ENCODE measurements at regions of chr14 and their contacts with region 1.

Region 1: DNA sequence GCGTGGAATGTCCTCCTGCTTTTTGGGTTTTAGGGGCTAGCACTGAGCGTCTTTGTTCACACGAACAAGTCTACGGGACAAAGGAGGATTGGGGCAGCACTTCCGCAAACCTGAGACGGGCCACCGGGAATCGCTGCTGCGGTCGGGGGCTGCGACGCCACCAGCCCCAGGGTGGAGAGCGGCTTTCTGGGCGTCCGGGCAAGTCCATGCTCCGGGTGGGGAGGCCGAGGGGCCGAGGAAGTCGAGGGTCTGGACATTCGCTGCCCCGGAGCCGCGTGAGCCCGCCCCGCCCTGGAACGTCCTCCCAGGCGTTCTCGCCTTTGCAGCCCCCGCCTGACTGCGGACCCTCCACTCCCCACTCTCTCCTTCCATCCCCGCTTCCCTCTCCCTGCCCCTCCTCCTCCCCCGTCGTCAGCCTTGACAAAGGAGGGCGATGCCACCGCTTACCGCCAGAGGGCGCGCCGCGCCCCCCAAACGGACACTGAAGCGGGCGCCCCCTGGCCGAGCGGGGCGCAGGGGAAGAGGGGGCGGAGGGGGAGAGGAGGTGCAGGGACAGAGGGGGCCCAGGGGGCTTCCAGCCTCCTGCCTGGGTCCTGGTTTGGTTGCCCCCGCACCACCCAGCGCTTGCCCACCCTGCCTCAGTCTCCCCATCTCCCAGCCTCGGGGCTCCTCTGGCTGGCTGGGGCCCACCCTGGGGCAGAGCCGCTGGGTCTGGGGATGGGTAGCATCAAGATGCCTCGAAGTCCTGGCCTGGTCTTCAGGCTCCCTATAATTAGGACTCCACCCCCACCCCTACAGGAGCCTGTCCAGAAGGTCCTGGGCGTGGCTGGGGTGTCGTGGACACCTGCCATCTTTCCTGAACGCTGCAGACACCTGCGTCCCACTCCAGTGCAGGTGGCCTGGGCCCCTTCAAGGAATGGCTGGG is 39.1 kb upstream of the INF2 start:
- DNase-seq: peak; percentile 66
- H3K4me3 ChIP-seq: peak overlapping the region; percentile 15 to 40 (median 36)
- H3K27ac ChIP-seq: no peak overlapping the region
- H3K4me1 ChIP-seq: peaks cover 3% of the 10 kb centered on the region
- H3K27me3 ChIP-seq: peaks cover 0 to 6% of the 10 kb centered on the region in 2 experiments
- CTCF ChIP-seq: peak; percentile 96 to 100
- POLR2A ChIP-seq: no peak

Region 2: DNA sequence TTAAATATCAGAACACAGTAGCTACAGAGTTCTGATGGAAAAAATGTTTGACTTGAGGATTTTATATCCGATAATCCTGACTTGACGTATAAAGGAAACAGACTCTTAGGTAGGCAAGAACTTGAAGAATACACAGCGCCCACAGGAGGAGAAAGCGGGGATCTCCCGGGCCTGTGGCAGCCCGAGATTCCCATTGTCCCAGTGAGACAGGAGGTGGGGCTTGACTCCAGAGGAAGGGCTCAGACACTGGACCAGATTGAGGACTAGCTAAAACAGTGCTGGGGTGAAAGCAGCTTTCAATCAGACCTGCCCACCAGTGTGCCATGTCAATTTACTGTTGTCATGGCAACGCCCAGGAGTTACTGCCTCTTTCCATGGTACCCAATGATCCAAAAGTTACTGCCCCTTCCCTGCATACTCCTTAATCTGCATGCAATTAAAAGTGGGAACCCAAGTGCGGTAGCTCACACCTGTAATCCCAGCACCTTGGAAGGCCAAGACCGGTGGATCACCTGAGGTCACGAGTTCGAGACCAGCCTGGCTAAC is 121.8 kb before region 1 on chr14:
- CTCF ChIA-PET with region 1: no interaction called
- POLR2A ChIA-PET with region 1: no interaction called
- dilution Hi-C with region 1: no loop called
- intact Hi-C with region 1: no loop called
- DNase-seq: no peak
- H3K4me3 ChIP-seq: no peak overlapping the region
- H3K27ac ChIP-seq: no peak overlapping the region
- H3K4me1 ChIP-seq: no peaks in the 10 kb centered on the region
- H3K27me3 ChIP-seq: no peaks in the 10 kb centered on the region
- CTCF ChIP-seq: no peak
- POLR2A ChIP-seq: no peak

Region 3: GRCh38 chr14:104554608-104555429 is 95.5 kb before region 1 on chr14:
- CTCF ChIA-PET with region 1: no interaction called
- POLR2A ChIA-PET with region 1: no interaction called
- dilution Hi-C with region 1: no loop called
- intact Hi-C with region 1: no loop called
- DNase-seq: no peak
- H3K4me3 ChIP-seq: no peak overlapping the region
- H3K27ac ChIP-seq: no peak overlapping the region
- H3K4me1 ChIP-seq: no peaks in the 10 kb centered on the region
- H3K27me3 ChIP-seq: no peaks in the 10 kb centered on the region
- CTCF ChIP-seq: no peak
- POLR2A ChIP-seq: no peak

Region 4: GRCh38 chr14:104677512-104678332 is 27.4 kb after region 1 on chr14:
- CTCF ChIA-PET with region 1: interaction called, 4 read pairs
- POLR2A ChIA-PET with region 1: no interaction called
- dilution Hi-C with region 1: no loop called
- intact Hi-C with region 1: loop called (anchors 1 kb)
- DNase-seq: peak; percentile 92
- H3K4me3 ChIP-seq: peak overlapping the region in 2 of 3 experiments; percentile 19 to 38
- H3K27ac ChIP-seq: peak overlapping the region; percentile 95
- H3K4me1 ChIP-seq: peaks cover 40% of the 10 kb centered on the region
- H3K27me3 ChIP-seq: no peaks in the 10 kb centered on the region
- CTCF ChIP-seq: no peak
- POLR2A ChIP-seq: peak; percentile 71

Region 5: GRCh38 chr14:104689109-104689880 is 39.0 kb after region 1 on chr14 and contains the start of gene INF2:
- CTCF ChIA-PET with region 1: interaction called, 3 read pairs
- POLR2A ChIA-PET with region 1: no interaction called
- dilution Hi-C with region 1: no loop called
- intact Hi-C with region 1: loop called (anchors 1 kb)
- DNase-seq: peak; percentile 35
- H3K4me3 ChIP-seq: peak within 1 kb of the TSS; percentile 69 to 92 (median 87)
- H3K27ac ChIP-seq: peak within 1 kb of the TSS; percentile 50
- H3K4me1 ChIP-seq: peaks cover 28% of the 10 kb centered on the region
- H3K27me3 ChIP-seq: no peaks in the 10 kb centered on the region
- CTCF ChIP-seq: no peak
- POLR2A ChIP-seq: peak; percentile 76
- total RNA-seq, gene INF2: 117 and 124 TPM in 2 replicates

Region 6: DNA sequence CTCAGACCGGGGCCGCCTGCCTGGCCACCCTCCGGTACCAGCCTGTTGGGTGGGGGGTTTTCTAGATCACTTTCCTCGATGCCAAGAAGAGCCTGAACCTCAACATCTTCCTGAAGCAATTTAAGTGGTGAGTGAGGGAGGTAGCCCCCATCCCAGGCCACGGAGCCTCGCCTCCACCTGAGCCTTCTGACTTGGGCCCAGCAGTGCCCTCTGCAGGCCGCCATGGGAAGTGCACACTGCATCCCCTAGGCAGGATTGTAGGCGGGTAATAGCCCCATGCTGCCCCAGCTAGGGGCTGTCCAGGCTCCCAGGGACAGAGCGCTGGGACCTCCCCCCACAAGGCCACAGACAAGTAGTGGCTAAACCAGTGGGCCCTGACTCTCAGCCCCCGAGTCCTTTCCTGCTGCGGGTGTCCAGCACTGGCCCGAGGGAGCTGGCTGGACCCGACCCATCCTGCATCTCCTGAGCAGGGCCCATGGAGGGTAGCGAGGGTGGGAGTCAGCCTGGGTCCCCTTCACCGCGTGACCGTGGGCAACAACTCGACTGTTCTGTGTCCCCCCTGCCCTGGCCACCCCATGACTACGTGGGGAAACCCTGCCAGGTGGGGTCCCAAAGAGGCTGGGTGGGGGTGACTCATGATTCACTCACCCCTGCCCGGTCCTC is 58.4 kb after region 1 on chr14:
- CTCF ChIA-PET with region 1: interaction called, 13 read pairs
- POLR2A ChIA-PET with region 1: no interaction called
- dilution Hi-C with region 1: no loop called
- intact Hi-C with region 1: loop called (anchors 1 kb)
- DNase-seq: peak; percentile 61
- H3K4me3 ChIP-seq: no peak overlapping the region
- H3K27ac ChIP-seq: no peak overlapping the region
- H3K4me1 ChIP-seq: no peaks in the 10 kb centered on the region
- H3K27me3 ChIP-seq: no peaks in the 10 kb centered on the region
- CTCF ChIP-seq: peak; percentile 97 to 98
- POLR2A ChIP-seq: no peak

Region 7: DNA sequence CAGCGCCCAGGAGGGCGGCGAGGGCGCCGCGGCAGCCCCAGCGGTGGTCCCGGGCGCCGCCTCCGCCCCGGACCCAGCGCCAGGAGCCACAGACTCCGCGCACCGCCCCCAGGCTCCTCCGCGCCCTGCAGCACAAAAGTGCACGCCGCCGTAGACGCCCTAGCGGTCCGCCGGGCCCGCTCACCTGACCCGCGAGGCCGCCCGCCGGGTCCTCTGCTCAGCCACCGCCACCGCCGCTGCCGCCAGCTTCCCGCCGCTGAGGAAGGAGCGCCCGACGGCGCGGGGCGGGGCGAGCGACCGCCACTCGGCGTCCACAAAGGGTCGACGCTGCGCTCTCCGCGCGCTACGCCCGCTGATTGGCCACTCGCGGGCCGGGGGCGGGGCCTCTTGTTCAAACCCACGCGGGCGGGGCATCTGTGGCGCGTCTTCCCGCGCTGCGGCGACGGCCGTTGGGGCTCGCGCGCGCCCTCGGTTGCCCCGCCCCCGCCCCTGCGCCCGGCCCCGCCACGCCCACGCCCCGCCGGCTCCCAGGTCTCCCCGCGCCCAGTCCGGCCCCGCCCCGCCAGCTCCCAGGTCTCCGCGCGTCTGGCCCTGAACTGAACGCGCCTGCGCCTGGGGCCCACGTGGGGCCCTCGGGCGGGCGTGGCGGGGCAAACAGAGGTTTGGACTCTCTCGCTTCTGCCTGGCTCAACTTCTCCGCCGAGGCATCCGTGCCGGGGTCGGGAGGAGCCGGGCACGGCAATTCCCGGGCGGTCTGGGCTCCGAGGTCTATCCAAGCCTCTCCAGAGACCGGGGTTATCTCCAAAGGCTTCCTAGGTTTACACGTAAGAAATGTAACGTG is 370.7 kb after region 1 on chr14 and contains the start of gene CDCA4:
- CTCF ChIA-PET with region 1: no interaction called
- POLR2A ChIA-PET with region 1: no interaction called
- dilution Hi-C with region 1: no loop called
- intact Hi-C with region 1: no loop called
- DNase-seq: peak; percentile 96
- H3K4me3 ChIP-seq: peak within 1 kb of the TSS; percentile 68 to 96 (median 72)
- H3K27ac ChIP-seq: peak within 1 kb of the TSS; percentile 80
- H3K4me1 ChIP-seq: peaks cover 58% of the 10 kb centered on the region
- H3K27me3 ChIP-seq: no peaks in the 10 kb centered on the region
- CTCF ChIP-seq: no peak
- POLR2A ChIP-seq: peak; percentile 80
- total RNA-seq, gene CDCA4: 44.5 and 46.3 TPM in 2 replicates

Measured in endothelial cell of umbilical vein (primary cell).